Activated CD4-positive, alpha-beta memory T cell treated with anti-CD3 and anti-CD28 coated beads for 36 hours (primary cell): ENCODE measurements at regions of chr2 and their contacts with region 1.

Region 1: DNA sequence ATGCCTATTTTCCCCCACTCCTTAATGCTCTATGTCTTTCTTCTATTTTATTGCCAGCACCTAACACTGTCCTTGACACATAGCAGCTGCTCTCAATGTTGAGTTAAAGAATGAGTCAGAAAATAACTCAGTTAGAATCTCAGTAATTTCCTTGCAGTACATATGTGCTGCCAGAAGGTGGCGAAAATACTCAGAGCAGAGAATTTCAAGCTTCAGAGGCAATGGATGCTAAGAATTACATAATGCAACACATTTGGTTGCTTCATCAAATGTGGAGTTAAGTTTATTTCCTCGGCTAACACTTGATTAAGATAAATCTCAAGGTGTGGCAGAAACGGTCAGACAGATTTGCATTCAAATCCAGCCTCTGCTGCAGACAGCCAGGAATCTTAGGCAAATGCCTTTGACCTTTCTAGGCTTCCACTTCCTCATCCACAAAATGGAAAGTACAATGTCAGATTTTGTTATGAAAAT is 105.6 kb downstream of the VSNL1 start:
- DNase-seq: peak; percentile 53
- H3K4me3 Mint-ChIP-seq: no peak overlapping the region
- H3K27ac Mint-ChIP-seq: no peak overlapping the region
- H3K4me1 Mint-ChIP-seq: peaks cover 5% of the 10 kb centered on the region
- H3K27me3 Mint-ChIP-seq: no peaks in the 10 kb centered on the region

Region 2: DNA sequence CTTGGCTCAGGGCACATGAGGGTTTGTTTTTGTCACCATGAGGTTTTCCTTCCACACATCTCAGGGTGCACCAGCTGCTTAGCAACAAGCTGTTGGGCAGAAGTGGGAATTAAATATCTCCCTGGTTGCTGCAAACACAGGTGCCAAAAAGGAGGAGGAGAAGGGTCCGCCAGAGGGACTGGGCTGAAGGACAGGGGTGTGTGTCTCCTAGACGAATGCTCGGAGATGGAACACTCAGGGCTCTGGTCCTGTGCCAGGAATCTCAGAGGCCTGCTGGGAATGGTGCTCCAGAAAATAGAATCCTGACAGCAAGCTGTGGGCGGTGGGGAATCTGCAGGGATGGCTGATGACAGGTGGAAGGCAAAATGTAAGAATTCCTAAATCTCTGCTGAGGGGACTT is 11.1 kb before region 1 on chr2:
- CTCF ChIA-PET with region 1: interaction called, 12 read pairs
- POLR2A ChIA-PET with region 1: no interaction called
- intact Hi-C with region 1: no loop called
- DNase-seq: no peak
- H3K4me3 Mint-ChIP-seq: no peak overlapping the region
- H3K27ac Mint-ChIP-seq: no peak overlapping the region
- H3K4me1 Mint-ChIP-seq: no peaks in the 10 kb centered on the region
- H3K27me3 Mint-ChIP-seq: no peaks in the 10 kb centered on the region

Region 3: DNA sequence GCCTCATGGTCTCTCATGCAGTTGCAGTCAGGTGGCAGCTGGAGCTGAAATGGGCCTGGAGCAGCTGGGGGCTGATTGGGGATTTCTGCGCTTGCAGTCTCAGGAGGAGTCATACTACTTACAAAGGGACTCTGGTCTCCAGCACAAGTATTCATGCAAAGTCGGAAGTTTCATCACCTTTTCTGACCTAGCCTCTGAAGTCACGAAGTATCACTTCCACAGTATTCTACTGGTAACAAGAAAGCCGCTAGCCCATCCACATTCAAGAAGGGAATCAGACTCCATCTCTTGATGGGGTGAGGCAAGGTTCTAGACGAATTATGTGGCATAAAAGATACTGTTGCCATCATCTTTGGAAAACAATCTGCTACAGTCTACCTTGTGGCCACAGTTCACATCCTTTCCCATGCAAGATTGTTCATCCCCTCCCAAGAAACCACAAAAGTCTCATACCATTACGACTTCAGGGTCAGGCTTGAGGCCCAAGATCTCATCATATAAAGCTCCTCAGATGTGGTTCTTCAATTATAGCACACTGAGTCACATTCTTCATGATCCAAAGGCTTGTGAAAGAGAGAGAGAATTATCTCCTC is 12.2 kb after region 1 on chr2:
- CTCF ChIA-PET with region 1: interaction called, 39 read pairs
- POLR2A ChIA-PET with region 1: no interaction called
- intact Hi-C with region 1: loop called (anchors 1 kb)
- DNase-seq: peak; percentile 42
- H3K4me3 Mint-ChIP-seq: no peak overlapping the region
- H3K27ac Mint-ChIP-seq: peak overlapping the region; percentile 40
- H3K4me1 Mint-ChIP-seq: peaks cover 13% of the 10 kb centered on the region
- H3K27me3 Mint-ChIP-seq: no peaks in the 10 kb centered on the region

Region 4: DNA sequence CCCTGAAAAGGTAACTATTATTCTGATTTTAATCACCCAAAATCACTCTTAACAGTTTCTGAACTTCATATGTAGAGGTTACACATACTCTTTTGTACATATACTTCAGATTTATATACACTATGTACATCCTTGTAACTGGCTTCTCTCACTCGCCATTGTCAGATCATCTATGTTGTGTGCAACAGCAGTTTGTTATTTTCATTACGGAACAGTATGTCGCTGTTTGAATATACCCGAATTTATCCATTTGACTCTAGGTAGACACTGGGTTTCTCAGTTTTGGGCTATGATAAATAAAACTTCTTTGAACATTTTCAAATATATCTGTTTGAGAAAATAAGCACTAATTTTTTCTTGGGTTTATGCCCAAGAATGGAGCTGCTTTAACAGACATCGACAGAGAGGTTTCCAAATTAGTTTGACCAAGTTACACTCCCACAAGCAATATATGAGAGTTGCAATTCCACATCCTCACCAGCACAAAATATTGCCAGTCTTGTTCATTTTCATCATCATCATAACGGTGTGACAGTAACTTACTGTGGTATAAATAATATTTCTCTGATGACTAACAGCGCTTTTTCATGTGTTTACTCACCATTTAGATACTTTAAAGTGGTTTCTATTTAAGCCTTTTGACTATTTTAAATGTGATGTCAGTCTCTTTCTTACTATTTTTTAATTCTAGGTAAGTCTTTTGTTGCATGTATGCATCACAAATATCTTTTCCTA is 26.6 kb after region 1 on chr2:
- CTCF ChIA-PET with region 1: interaction called, 131 read pairs
- POLR2A ChIA-PET with region 1: interaction called, 4 read pairs
- intact Hi-C with region 1: loop called (anchors 1 kb)
- DNase-seq: no peak
- H3K4me3 Mint-ChIP-seq: no peak overlapping the region
- H3K27ac Mint-ChIP-seq: no peak overlapping the region
- H3K4me1 Mint-ChIP-seq: peaks cover 14% of the 10 kb centered on the region
- H3K27me3 Mint-ChIP-seq: no peaks in the 10 kb centered on the region

Region 5: GRCh38 chr2:18178736-18179349 is 532.7 kb after region 1 on chr2:
- CTCF ChIA-PET with region 1: no interaction called
- POLR2A ChIA-PET with region 1: no interaction called
- intact Hi-C with region 1: loop called (anchors 5 kb)
- DNase-seq: peak; percentile 13
- H3K4me3 Mint-ChIP-seq: no peak overlapping the region
- H3K27ac Mint-ChIP-seq: no peak overlapping the region
- H3K4me1 Mint-ChIP-seq: no peaks in the 10 kb centered on the region
- H3K27me3 Mint-ChIP-seq: peaks cover 7% of the 10 kb centered on the region

Region 6: GRCh38 chr2:18378020-18378653 is 732.0 kb after region 1 on chr2:
- CTCF ChIA-PET with region 1: no interaction called
- POLR2A ChIA-PET with region 1: no interaction called
- intact Hi-C with region 1: loop called (anchors 5 kb)
- DNase-seq: peak; percentile 16
- H3K4me3 Mint-ChIP-seq: no peak overlapping the region
- H3K27ac Mint-ChIP-seq: no peak overlapping the region
- H3K4me1 Mint-ChIP-seq: no peaks in the 10 kb centered on the region
- H3K27me3 Mint-ChIP-seq: peaks cover 8% of the 10 kb centered on the region